ENCODE measurements at regions of chr5 and their contacts with region 1.

Region 1: GRCh38 chr5:163631856-163632255 is 126.4 kb downstream of the MAT2B start:
- DNase-seq: no peak
- H3K4me3 Mint-ChIP-seq: no peak overlapping the region
- H3K27ac Mint-ChIP-seq: no peak overlapping the region
- H3K4me1 Mint-ChIP-seq: no peaks in the 10 kb centered on the region
- H3K27me3 Mint-ChIP-seq: no peaks in the 10 kb centered on the region
- CTCF ChIP-seq: no peak

Region 2: GRCh38 chr5:163649522-163649921 is 17.7 kb after region 1 on chr5:
- CTCF ChIA-PET with region 1: interaction called, 6 read pairs
- POLR2A ChIA-PET with region 1: interaction called, 23 read pairs
- intact Hi-C with region 1: no loop called
- DNase-seq: peak; percentile 99
- H3K4me3 Mint-ChIP-seq: peak overlapping the region; percentile 3
- H3K27ac Mint-ChIP-seq: peak overlapping the region; percentile 96
- H3K4me1 Mint-ChIP-seq: peaks cover 33% of the 10 kb centered on the region
- H3K27me3 Mint-ChIP-seq: no peaks in the 10 kb centered on the region
- CTCF ChIP-seq: no peak